ENCODE measurements at regions of chr4 and their contacts with region 1.

Region 1: DNA sequence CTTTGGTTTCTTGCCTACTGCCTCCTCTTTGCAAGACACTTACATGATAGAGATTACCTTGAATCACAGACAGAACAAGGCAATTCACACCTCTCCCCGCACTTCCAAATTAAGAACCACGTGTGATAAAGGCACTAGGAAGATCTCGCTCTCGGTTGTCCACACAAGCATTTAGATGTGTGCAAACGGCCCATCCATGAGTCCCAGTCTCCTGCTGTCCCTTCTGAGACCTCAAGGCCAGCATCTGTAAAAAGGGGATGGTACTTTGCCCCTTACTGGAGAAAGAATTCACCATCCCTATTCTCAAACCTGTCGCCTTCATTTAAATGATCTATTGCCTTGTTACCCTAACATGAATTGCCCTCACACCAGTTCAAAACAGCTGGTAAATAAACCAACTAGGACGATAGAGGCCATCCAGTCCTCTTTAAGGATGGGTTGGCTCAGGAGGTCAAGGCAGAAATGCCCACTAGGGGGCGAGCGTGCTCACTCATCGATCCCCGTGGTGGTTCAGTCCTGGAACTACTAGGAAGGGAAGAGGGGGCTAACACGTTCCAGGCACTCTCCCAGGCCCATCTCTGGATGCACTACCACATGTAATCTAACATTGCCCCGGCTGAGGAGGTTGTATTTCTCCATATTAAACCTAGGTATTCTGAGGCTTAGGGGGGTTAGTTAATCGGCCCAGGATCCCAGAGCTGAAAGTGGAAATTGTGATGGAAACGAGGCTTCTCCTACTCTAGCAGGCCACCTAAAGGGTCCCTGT is 95.8 kb downstream of the DHX15 start:
- DNase-seq: peak; percentile 79
- H3K4me3 ChIP-seq: no peak overlapping the region
- H3K27ac ChIP-seq: no peak overlapping the region
- H3K4me1 ChIP-seq: no peaks in the 10 kb centered on the region
- H3K27me3 ChIP-seq: no peaks in the 10 kb centered on the region
- CTCF ChIP-seq: peak; percentile 81 to 85 (median 83)
- EP300 ChIP-seq: no peak
- POLR2A ChIP-seq: no peak

Region 2: DNA sequence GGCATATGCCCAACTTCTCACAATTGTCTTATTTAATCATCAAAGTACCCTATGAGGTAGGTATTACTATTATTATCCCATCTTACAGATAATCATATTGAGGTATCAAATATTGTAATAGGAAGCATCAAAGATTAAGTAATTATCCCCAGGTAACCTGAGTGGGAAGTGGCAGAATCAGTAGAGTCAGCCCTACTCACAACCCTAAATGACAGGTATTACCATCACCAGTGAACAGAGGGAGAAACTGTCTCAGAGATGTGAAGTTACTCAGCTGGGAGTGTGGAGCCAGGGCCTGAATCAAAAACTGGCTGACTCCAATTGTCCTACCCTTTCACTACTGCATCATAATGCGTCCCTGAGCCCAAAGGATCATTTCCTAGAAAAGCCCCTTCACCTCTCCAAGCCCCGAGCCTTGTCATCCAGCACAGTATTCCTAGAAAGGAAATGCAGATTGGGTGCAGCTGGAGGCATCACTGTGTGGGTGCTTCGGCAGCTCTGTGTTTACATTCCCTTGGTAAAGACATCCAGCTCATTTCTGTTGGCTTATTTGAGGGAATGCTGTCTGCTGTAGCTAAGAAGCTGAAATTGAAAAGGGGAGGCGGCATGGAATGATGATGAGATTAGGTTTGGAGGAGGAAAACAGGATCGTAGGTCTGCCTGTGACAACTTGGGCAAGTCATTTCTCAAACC is 22.9 kb after region 1 on chr4:
- in situ Hi-C with region 1: no loop called
- intact Hi-C with region 1: no loop called
- DNase-seq: no peak
- H3K4me3 ChIP-seq: no peak overlapping the region
- H3K27ac ChIP-seq: no peak overlapping the region
- H3K4me1 ChIP-seq: no peaks in the 10 kb centered on the region
- H3K27me3 ChIP-seq: no peaks in the 10 kb centered on the region
- CTCF ChIP-seq: no peak
- EP300 ChIP-seq: no peak
- POLR2A ChIP-seq: no peak

Region 3: GRCh38 chr4:24570574-24571236 is 82.1 kb after region 1 on chr4:
- in situ Hi-C with region 1: no loop called
- intact Hi-C with region 1: no loop called
- DNase-seq: no peak
- H3K4me3 ChIP-seq: no peak overlapping the region
- H3K27ac ChIP-seq: no peak overlapping the region
- H3K4me1 ChIP-seq: peaks cover 0 to 59% (median 16%) of the 10 kb centered on the region in 4 donors
- H3K27me3 ChIP-seq: no peaks in the 10 kb centered on the region
- CTCF ChIP-seq: no peak
- EP300 ChIP-seq: no peak
- POLR2A ChIP-seq: no peak

Region 4: GRCh38 chr4:24686871-24687680 is 198.5 kb after region 1 on chr4:
- in situ Hi-C with region 1: loop called in 2 of 4 experiments (anchors 5 to 25 kb)
- intact Hi-C with region 1: no loop called
- DNase-seq: peak; percentile 66
- H3K4me3 ChIP-seq: no peak overlapping the region
- H3K27ac ChIP-seq: peak overlapping the region in 2 of 4 donors; percentile 7 to 52
- H3K4me1 ChIP-seq: no peaks in the 10 kb centered on the region
- H3K27me3 ChIP-seq: no peaks in the 10 kb centered on the region
- CTCF ChIP-seq: peak; percentile 48 to 79 (median 67)
- EP300 ChIP-seq: no peak
- POLR2A ChIP-seq: no peak

Region 5: GRCh38 chr4:24809376-24809775 is 320.8 kb after region 1 on chr4:
- in situ Hi-C with region 1: loop called in 1 of 4 experiments (anchors 25 kb)
- intact Hi-C with region 1: no loop called
- DNase-seq: no peak
- H3K4me3 ChIP-seq: no peak overlapping the region
- H3K27ac ChIP-seq: peak overlapping the region in 3 of 4 donors; percentile 11 to 56 (median 49)
- H3K4me1 ChIP-seq: peaks cover 0 to 3% (median 1%) of the 10 kb centered on the region in 4 donors
- H3K27me3 ChIP-seq: no peaks in the 10 kb centered on the region
- CTCF ChIP-seq: no peak
- EP300 ChIP-seq: no peak
- POLR2A ChIP-seq: no peak

Region 6: GRCh38 chr4:24912252-24913118 is 423.9 kb after region 1 on chr4 and contains the start of gene CCDC149:
- in situ Hi-C with region 1: loop called in 1 of 4 experiments (anchors 25 kb)
- intact Hi-C with region 1: no loop called
- DNase-seq: peak; percentile 78
- H3K4me3 ChIP-seq: peak within 1 kb of the TSS; percentile 59 to 84 (median 72)
- H3K27ac ChIP-seq: peak within 1 kb of the TSS; percentile 82 to 92 (median 88)
- H3K4me1 ChIP-seq: peaks cover 0 to 11% (median 6%) of the 10 kb centered on the region in 4 donors
- H3K27me3 ChIP-seq: no peaks in the 10 kb centered on the region
- CTCF ChIP-seq: peak in 1 of 5 experiments; percentile 15
- EP300 ChIP-seq: no peak
- POLR2A ChIP-seq: peak; percentile 46
- total RNA-seq, gene CCDC149: 3.4 to 10.0 (median 7.7) TPM

Measured in transverse colon (tissue), 4 donors.